ENCODE measurements at regions of chr5 and their contacts with region 1.

Region 1: GRCh38 chr5:61408476-61409168 is 76.6 kb downstream of the ZSWIM6 start:
- DNase-seq: peak; percentile 92 to 98 (median 95)
- ATAC-seq: peak; percentile 98
- H3K4me3 ChIP-seq: peak overlapping the region; percentile 36
- H3K4me3 Mint-ChIP-seq: peak overlapping the region; percentile 74 to 94 (median 84)
- H3K27ac ChIP-seq: peak overlapping the region; percentile 32
- H3K27ac Mint-ChIP-seq: peak overlapping the region; percentile 59 to 98 (median 91)
- H3K4me1 ChIP-seq: peaks cover 12 to 14% of the 10 kb centered on the region in 2 donors
- H3K4me1 Mint-ChIP-seq: peaks cover 22 to 38% (median 32%) of the 10 kb centered on the region in 7 donors
- H3K27me3 ChIP-seq: no peaks in the 10 kb centered on the region
- H3K27me3 Mint-ChIP-seq: peaks cover 0 to 15% (median 0%) of the 10 kb centered on the region in 5 donors

Region 2: GRCh38 chr5:60699530-60700382 is 708.9 kb before region 1 on chr5 and contains the start of gene DEPDC1B:
- CTCF ChIA-PET with region 1: no interaction called
- POLR2A ChIA-PET with region 1: no interaction called
- intact Hi-C with region 1: loop called (anchors 2 to 5 kb)
- DNase-seq: peak; percentile 68 to 92 (median 82)
- ATAC-seq: peak; percentile 93
- H3K4me3 ChIP-seq: peak within 1 kb of the TSS; percentile 97
- H3K4me3 Mint-ChIP-seq: peak within 1 kb of the TSS; percentile 87 to 99 (median 92)
- H3K27ac ChIP-seq: peak within 1 kb of the TSS; percentile 68
- H3K27ac Mint-ChIP-seq: peak within 1 kb of the TSS in 8 of 9 donors; percentile 61 to 91 (median 76)
- H3K4me1 ChIP-seq: peaks cover 0 to 8% of the 10 kb centered on the region in 2 donors
- H3K4me1 Mint-ChIP-seq: peaks cover 6 to 39% (median 19%) of the 10 kb centered on the region in 7 donors
- H3K27me3 ChIP-seq: no peaks in the 10 kb centered on the region
- H3K27me3 Mint-ChIP-seq: peaks cover 0 to 35% (median 0%) of the 10 kb centered on the region in 5 donors
- total RNA-seq, gene DEPDC1B: 0.24 to 24.0 (median 0.31) TPM in 4 of 5 experiments, not detected in the other

Region 3: DNA sequence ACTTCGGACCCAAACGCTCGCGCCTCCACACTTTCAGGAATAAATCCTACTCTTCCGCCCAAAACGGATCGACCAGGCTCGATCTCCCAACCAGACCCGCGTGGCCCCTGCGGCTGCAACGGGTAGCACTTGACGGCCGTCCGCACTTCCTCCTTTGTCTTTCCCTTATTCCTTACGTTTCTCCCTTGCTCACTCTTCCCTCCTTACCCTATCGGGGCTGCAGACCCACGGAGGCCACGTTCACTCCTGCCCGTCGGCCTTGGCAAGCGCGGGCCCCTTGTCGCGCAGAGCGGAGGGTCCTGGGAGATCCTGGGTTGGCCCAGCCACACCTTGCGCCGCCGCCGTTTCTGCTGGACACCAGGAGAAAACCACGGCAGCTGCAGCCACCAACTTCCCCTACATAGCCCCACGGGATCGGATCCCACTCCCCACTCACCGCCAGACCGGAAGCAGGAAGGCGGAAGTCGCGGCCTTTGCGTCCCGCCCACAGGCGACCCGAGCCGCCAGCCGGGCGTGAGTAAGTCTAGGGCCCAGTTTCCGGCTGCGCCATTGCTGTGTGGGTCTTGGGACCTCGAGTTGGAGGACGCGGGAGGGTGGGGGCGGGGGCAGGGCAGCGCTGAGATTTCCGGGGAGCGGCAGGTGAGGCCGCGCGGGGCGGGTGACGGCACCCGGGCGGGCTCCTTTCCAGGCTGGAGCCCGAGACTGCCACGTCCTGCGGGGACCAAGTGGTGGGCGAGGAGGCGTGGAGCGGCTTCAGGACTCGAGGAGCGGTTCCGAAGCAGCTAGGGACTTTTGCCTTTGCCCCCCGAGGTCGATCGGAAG is 246.4 kb before region 1 on chr5 and contains the start of gene SMIM15:
- CTCF ChIA-PET with region 1: no interaction called
- POLR2A ChIA-PET with region 1: no interaction called
- intact Hi-C with region 1: loop called (anchors 1 to 2 kb)
- DNase-seq: peak; percentile 59 to 85 (median 70)
- ATAC-seq: peak; percentile 93
- H3K4me3 ChIP-seq: peak within 1 kb of the TSS; percentile 87
- H3K4me3 Mint-ChIP-seq: peak within 1 kb of the TSS; percentile 92 to 98 (median 94)
- H3K27ac ChIP-seq: peak within 1 kb of the TSS; percentile 77
- H3K27ac Mint-ChIP-seq: peak within 1 kb of the TSS; percentile 80 to 98 (median 95)
- H3K4me1 ChIP-seq: peaks cover 8 to 16% of the 10 kb centered on the region in 2 donors
- H3K4me1 Mint-ChIP-seq: peaks cover 5 to 57% (median 46%) of the 10 kb centered on the region in 7 donors
- H3K27me3 ChIP-seq: no peaks in the 10 kb centered on the region
- H3K27me3 Mint-ChIP-seq: no peaks in the 10 kb centered on the region
- total RNA-seq, gene SMIM15: 17.3 to 49.0 (median 34.0) TPM

Region 4: GRCh38 chr5:61280205-61280604 is 128.4 kb before region 1 on chr5:
- CTCF ChIA-PET with region 1: no interaction called
- POLR2A ChIA-PET with region 1: no interaction called
- intact Hi-C with region 1: loop called in 1 of 2 experiments (anchors 5 kb)
- DNase-seq: peak in 4 of 9 donors; percentile 19 to 28 (median 25)
- ATAC-seq: no peak
- H3K4me3 ChIP-seq: no peak overlapping the region
- H3K4me3 Mint-ChIP-seq: no peak overlapping the region
- H3K27ac ChIP-seq: no peak overlapping the region
- H3K27ac Mint-ChIP-seq: peak overlapping the region in 1 of 9 donors; percentile 2
- H3K4me1 ChIP-seq: peaks cover 0 to 5% of the 10 kb centered on the region in 2 donors
- H3K4me1 Mint-ChIP-seq: peaks cover 16 to 37% (median 21%) of the 10 kb centered on the region in 7 donors
- H3K27me3 ChIP-seq: no peaks in the 10 kb centered on the region
- H3K27me3 Mint-ChIP-seq: no peaks in the 10 kb centered on the region

Region 5: DNA sequence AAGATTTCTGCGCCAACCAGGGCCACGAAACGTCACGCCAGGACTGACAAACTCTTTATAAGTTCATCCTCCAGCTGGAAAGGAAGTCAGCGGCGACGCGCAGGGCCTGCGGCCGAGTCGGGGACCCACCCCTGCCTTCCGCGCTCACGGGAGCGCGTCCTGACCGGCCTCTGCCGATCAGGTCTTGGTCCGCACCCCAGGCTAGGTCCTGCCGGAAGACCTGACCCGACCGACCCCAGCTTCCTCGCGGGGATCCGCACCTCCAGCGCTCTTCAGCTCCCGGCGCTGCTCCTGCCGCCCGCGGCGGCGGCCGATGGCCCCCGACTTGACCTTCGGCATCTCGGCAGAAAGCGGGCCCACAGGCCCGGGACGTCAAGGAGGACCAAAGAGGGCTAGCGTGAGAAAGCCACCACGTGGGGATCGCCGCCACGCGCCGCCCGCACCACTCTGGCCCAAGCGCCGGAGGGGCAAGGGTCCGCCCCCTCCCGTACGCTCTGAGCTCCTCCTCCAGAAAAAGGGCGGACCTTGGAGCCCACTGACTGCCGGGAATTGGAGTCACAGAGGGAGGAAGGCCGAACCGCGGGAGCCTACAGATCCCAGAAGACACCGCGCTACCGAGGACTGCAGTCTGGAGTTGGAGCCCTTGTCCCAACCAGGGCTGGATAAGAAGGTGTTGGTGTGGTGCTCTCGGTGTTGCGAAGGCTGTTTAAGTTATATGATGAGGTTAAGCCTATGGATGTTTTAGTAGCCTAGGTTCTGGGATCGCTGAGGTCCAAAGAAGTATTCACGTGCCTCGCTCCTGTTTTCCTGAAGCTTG is 995.0 kb after region 1 on chr5 and contains the start of gene DIMT1:
- CTCF ChIA-PET with region 1: no interaction called
- POLR2A ChIA-PET with region 1: no interaction called
- intact Hi-C with region 1: loop called in 1 of 2 experiments (anchors 10 kb)
- DNase-seq: peak; percentile 79 to 92 (median 90)
- ATAC-seq: peak; percentile 99
- H3K4me3 ChIP-seq: peak within 1 kb of the TSS; percentile 99
- H3K4me3 Mint-ChIP-seq: peak within 1 kb of the TSS; percentile 93 to 100 (median 98)
- H3K27ac ChIP-seq: peak within 1 kb of the TSS; percentile 89
- H3K27ac Mint-ChIP-seq: peak within 1 kb of the TSS; percentile 87 to 98 (median 94)
- H3K4me1 ChIP-seq: peaks cover 12 to 13% of the 10 kb centered on the region in 2 donors
- H3K4me1 Mint-ChIP-seq: peaks cover 21 to 38% (median 35%) of the 10 kb centered on the region in 7 donors
- H3K27me3 ChIP-seq: no peaks in the 10 kb centered on the region
- H3K27me3 Mint-ChIP-seq: no peaks in the 10 kb centered on the region
- total RNA-seq, gene DIMT1: 18.3 to 28.8 (median 21.3) TPM

Region 6: DNA sequence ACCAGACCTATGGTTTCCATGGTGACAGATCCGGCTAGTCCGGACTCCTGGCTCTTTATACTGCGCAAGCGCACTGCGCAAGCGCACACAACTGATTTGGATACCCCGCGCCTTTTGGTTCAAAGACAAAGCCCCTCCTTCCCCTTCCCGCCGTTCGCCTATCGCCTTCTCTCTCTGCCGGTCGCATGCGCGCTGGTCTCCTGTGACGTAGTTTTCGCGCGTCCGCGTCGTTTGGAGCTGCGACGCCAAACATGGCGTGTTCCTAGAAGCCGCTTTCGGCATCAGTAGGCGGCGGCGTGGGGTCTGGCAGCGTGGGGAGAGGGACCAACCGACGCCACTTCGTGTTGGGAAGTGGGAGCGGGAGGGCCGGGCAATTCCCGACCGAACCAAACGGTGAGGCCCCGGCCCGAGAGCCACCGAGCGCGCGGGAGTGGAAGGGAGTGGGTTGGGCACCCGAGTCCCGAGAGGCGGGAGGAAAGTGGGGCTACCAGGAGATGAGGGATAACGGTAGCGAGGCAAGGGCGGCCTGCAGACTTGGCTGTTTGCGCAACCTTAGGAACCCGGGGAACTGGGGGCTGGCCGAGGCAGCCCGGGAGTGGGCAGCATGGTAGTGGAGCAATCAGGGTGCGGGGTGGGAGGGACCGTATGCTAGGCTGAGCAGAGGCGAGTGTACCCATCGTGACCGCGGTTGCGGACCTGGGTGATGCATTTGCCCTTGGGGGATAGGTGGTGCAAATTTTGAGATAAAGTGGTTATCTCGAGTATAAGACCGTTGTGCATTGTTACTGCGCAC is 1004.1 kb after region 1 on chr5 and contains the start of gene IPO11:
- CTCF ChIA-PET with region 1: no interaction called
- POLR2A ChIA-PET with region 1: no interaction called
- intact Hi-C with region 1: loop called (anchors 5 to 10 kb)
- DNase-seq: peak; percentile 97 to 98 (median 98)
- ATAC-seq: peak; percentile 96
- H3K4me3 ChIP-seq: peak within 1 kb of the TSS; percentile 91
- H3K4me3 Mint-ChIP-seq: peak within 1 kb of the TSS; percentile 81 to 97 (median 92)
- H3K27ac ChIP-seq: peak within 1 kb of the TSS; percentile 80
- H3K27ac Mint-ChIP-seq: peak within 1 kb of the TSS; percentile 87 to 96 (median 93)
- H3K4me1 ChIP-seq: peaks cover 11 to 12% of the 10 kb centered on the region in 2 donors
- H3K4me1 Mint-ChIP-seq: peaks cover 8 to 39% (median 29%) of the 10 kb centered on the region in 7 donors
- H3K27me3 ChIP-seq: no peaks in the 10 kb centered on the region
- H3K27me3 Mint-ChIP-seq: peaks cover 0 to 7% (median 0%) of the 10 kb centered on the region in 5 donors
- total RNA-seq, gene IPO11: 22.1 to 29.0 (median 27.7) TPM

Measured in naive thymus-derived CD4-positive, alpha-beta T cell (primary cell).